ENCODE measurements at regions of chr22 and their contacts with region 1.

Region 1: GRCh38 chr22:19717691-19718455 is 3.6 kb downstream of the SEPTIN5 start:
- H3K4me3 Mint-ChIP-seq: peak overlapping the region; percentile 68
- H3K27ac Mint-ChIP-seq: no peak overlapping the region
- H3K4me1 Mint-ChIP-seq: peaks cover 17% of the 10 kb centered on the region
- H3K27me3 Mint-ChIP-seq: peaks cover 85% of the 10 kb centered on the region

Region 2: DNA sequence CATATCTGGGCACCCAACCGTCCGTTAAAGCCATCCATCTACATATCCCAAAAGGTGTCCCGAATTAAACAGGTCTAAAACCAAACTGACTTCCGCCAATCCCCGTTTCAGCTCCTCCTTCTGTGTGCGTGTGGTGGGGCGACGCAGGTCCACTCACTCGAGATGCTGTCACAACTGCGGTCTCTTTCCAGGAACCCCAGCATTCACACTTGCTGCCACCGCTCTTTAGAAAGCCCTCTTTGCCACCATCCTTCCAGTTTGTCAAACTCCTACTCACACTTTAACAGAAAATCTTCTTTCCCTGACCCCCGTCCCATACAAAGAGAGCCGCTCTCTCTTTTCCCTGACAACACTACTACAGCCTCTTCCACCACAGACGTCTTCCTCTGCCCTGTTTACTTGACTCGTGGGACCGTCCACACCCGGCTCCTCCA is 573.9 kb before region 1 on chr22:
- intact Hi-C with region 1: loop called (anchors 10 kb)
- H3K4me3 Mint-ChIP-seq: peak overlapping the region; percentile 100
- H3K27ac Mint-ChIP-seq: peak overlapping the region; percentile 94
- H3K4me1 Mint-ChIP-seq: peaks cover 14% of the 10 kb centered on the region
- H3K27me3 Mint-ChIP-seq: peaks cover 30% of the 10 kb centered on the region

Region 3: DNA sequence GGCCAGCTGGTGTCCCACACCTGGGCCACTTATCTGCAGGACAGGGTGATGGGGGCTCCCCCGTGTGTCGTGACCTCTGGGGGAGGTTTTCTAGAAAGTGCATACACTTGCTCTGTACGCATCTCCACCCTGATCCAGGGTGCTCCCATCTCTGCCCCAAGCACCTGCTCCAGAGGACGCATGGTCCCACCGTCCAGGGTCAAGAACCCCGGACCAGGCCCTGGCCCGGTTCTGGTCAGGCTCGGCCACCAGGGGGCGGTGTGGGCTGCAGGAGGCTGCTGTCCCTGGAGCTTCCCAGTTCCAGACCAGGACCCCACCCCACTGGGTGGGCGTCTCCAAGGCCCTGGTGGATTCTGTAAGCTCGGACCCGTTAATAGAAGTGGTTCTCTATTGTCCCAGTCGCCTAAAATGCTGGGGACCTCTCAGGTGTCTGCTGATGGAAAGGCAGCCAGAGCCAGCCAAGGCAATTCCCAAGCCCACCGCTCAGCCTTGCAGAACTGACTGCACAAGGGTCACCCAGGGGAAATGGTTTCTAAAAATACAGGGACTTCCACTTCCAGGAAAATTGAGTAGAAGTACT is 38.3 kb before region 1 on chr22:
- intact Hi-C with region 1: loop called (anchors 5 kb)
- H3K4me3 Mint-ChIP-seq: no peak overlapping the region
- H3K27ac Mint-ChIP-seq: no peak overlapping the region
- H3K4me1 Mint-ChIP-seq: peaks cover 5% of the 10 kb centered on the region
- H3K27me3 Mint-ChIP-seq: peaks cover 11% of the 10 kb centered on the region